ENCODE measurements at regions of chr5 and their contacts with region 1.

Region 1: DNA sequence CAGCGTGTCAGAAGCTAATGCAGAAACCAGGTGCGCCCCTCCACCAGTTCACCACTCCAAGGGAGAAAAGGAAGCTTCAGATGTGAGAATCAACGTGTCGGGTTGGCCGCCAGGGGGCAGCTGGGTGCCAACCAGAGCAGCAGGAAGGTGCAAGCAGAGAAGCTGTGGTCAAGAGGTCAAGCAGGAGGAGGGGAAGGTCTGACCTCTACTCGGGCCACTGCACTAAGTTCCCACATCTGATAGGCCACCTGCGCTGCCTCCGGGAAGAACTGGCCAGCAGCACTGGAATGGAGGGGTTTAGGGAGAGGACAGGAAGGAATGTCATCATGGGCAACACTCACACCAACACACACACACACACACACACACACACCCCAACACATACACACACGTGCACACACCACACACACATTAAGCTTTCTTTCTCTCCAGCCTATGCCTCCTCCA is 31.4 kb downstream of the ANXA6 start:
- DNase-seq: peak; percentile 67 to 87 (median 79)
- H3K4me3 ChIP-seq: no peak overlapping the region
- H3K27ac ChIP-seq: no peak overlapping the region
- H3K4me1 ChIP-seq: peaks cover 0 to 8% of the 10 kb centered on the region in 2 donors
- H3K27me3 ChIP-seq: no peaks in the 10 kb centered on the region
- CTCF ChIP-seq: peak; percentile 54 to 91 (median 80)
- POLR2A ChIP-seq: no peak

Region 2: GRCh38 chr5:150999704-151000442 is 126.3 kb before region 1 on chr5:
- intact Hi-C with region 1: no loop called
- DNase-seq: peak in 4 of 7 donors; percentile 32 to 46 (median 40)
- H3K4me3 ChIP-seq: no peak overlapping the region
- H3K27ac ChIP-seq: no peak overlapping the region
- H3K4me1 ChIP-seq: peaks cover 3 to 6% of the 10 kb centered on the region in 2 donors
- H3K27me3 ChIP-seq: no peaks in the 10 kb centered on the region
- CTCF ChIP-seq: no peak
- POLR2A ChIP-seq: no peak

Region 3: DNA sequence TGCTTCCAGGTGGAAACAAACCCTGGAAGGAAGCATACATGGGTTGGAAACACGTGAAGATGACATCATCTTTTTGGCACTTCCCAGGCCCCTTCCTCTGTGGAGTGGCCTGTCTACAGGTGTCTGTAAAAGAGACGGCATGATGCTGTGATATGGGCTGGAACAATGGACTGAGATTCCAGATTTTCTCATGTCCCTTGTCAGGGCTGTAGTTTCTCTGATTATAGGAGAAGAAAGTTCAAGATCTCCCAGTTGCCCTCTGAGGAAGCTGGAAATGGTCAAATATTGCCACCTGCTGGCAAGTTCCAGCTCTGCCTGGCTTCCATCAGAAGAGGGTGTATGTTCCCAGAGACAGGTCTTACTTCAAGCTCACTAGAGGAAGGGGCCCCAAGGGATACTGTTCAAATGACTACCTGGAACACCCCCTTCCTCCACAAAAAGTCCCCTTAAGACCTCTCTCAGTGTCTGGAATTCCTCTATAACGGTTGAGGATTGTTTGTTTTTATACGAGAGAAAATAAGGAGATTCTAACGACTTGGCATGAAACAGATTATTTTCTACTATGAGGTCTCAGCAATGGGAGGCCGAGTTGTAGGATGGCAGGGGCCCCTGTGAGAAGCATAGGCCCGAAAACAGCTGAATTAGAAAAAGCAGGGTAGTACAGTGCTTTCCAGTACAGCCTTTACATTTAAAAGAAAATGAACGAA is 38.6 kb after region 1 on chr5:
- intact Hi-C with region 1: loop called (anchors 5 kb)
- DNase-seq: peak; percentile 68 to 91 (median 79)
- H3K4me3 ChIP-seq: no peak overlapping the region
- H3K27ac ChIP-seq: no peak overlapping the region
- H3K4me1 ChIP-seq: peaks cover 7 to 13% of the 10 kb centered on the region in 2 donors
- H3K27me3 ChIP-seq: no peaks in the 10 kb centered on the region
- CTCF ChIP-seq: peak; percentile 73 to 94 (median 92)
- POLR2A ChIP-seq: no peak

Region 4: GRCh38 chr5:151223469-151224264 is 97.4 kb after region 1 on chr5 and contains the start of gene CCDC69:
- intact Hi-C with region 1: no loop called
- DNase-seq: peak; percentile 73 to 89 (median 84)
- H3K4me3 ChIP-seq: peak within 1 kb of the TSS; percentile 39 to 81 (median 72)
- H3K27ac ChIP-seq: peak within 1 kb of the TSS; percentile 12 to 92 (median 84)
- H3K4me1 ChIP-seq: peaks cover 22 to 51% of the 10 kb centered on the region in 2 donors
- H3K27me3 ChIP-seq: no peaks in the 10 kb centered on the region
- CTCF ChIP-seq: peak in 5 of 6 experiments; percentile 17 to 33 (median 27)
- POLR2A ChIP-seq: peak; percentile 79 to 91
- total RNA-seq, gene CCDC69: 123 to 241 (median 175) TPM